ENCODE measurements at regions of chr5 and their contacts with region 1.

Region 1: DNA sequence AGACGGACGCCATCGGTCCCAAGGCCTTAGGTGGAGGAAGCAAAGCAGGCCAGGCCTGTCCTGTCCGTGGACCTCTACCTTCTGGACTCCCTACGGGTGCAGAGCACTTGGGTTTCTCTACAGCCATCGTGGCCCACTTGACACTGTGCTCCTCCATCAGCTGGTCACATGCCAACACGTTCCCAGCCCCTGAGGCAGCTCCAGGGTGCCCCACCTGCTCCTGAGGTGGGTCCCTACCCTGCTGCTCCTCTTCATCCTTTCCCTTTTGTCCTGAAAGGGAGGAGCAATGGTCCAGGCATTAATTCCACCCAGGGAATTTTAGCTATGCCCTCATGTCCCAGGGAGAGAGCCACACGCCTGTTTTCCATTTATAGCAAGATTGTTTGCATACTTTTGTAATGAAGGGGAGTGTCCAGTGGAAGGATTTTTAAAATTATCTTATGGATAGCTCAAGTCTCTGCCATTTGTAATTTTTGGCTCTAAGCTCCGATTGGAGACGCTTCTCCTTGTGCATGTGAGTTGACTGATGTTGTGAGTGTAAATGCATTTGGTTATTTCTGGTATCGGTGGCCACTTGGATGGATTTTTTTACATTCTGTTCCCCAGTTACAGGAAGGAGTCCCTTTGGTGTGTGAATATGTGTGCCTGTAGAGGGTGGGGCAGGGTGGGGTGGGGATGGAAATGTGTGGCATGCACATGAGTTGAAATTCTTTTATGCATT is 7.3 kb upstream of the RPL26L1 start:
- DNase-seq: peak in 1 of 2 experiments; percentile 41
- H3K4me3 ChIP-seq: no peak overlapping the region
- H3K27ac ChIP-seq: 0 out of 2 replicates have a peak overlapping the region, but pooled peaks have one; percentile 11
- H3K4me1 ChIP-seq: peaks cover 6% of the 10 kb centered on the region
- H3K27me3 ChIP-seq: no peaks in the 10 kb centered on the region
- CTCF ChIP-seq: no peak

Region 2: GRCh38 chr5:172817664-172818063 is 134.3 kb before region 1 on chr5:
- CTCF ChIA-PET with region 1: no interaction called
- POLR2A ChIA-PET with region 1: interaction called, 28 read pairs
- intact Hi-C with region 1: no loop called
- DNase-seq: no peak
- H3K4me3 ChIP-seq: no peak overlapping the region
- H3K27ac ChIP-seq: no peak overlapping the region
- H3K4me1 ChIP-seq: no peaks in the 10 kb centered on the region
- H3K27me3 ChIP-seq: no peaks in the 10 kb centered on the region
- CTCF ChIP-seq: no peak

Region 3: DNA sequence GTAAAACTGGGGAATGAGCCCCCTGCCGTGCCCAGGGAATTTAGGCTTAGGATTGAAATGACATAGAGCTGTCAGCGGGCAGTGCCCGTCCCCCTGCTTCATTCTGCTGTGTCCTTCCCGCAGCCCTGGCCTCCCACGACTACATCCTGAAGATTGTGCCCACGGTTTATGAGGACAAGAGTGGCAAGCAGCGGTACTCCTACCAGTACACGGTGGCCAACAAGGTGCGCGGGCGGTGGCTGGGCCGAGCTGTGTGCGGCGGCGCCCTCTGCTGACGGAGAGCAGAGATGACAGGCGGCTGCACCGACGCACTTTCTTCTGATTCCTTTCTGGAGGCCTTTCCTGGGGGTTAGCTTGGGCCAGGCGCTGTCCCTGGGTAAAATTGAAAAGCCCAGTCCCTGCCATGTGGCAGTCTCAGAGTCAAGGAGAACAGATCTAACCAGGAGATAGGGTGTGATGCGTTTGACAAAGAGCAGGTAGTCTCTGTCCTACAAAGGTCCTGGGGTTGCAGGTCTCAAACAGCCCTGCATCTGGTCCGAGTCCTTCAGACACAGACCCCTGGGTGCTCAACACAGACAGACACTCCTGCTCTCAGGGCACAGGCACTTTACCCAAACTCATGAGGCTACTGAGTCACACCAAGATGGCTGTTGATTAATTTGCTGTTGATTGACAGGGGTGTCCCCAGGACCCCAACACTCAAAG is 19.5 kb before region 1 on chr5:
- CTCF ChIA-PET with region 1: no interaction called
- POLR2A ChIA-PET with region 1: no interaction called
- intact Hi-C with region 1: no loop called
- DNase-seq: peak in 1 of 2 experiments; percentile 70
- H3K4me3 ChIP-seq: no peak overlapping the region
- H3K27ac ChIP-seq: no peak overlapping the region
- H3K4me1 ChIP-seq: peaks cover 22% of the 10 kb centered on the region
- H3K27me3 ChIP-seq: no peaks in the 10 kb centered on the region
- CTCF ChIP-seq: peak; percentile 85

Region 4: GRCh38 chr5:173035904-173036707 is 84.2 kb after region 1 on chr5:
- CTCF ChIA-PET with region 1: interaction called, 17 read pairs
- POLR2A ChIA-PET with region 1: no interaction called
- intact Hi-C with region 1: no loop called
- DNase-seq: no peak
- H3K4me3 ChIP-seq: no peak overlapping the region
- H3K27ac ChIP-seq: no peak overlapping the region
- H3K4me1 ChIP-seq: no peaks in the 10 kb centered on the region
- H3K27me3 ChIP-seq: no peaks in the 10 kb centered on the region
- CTCF ChIP-seq: no peak